ENCODE measurements at regions of chr3 and their contacts with region 1.

Region 1: GRCh38 chr3:183357564-183358079 is 70.8 kb downstream of the MCF2L2 start:
- DNase-seq: no peak
- H3K4me3 Mint-ChIP-seq: no peak overlapping the region
- H3K27ac Mint-ChIP-seq: no peak overlapping the region
- H3K4me1 Mint-ChIP-seq: no peaks in the 10 kb centered on the region
- H3K27me3 Mint-ChIP-seq: no peaks in the 10 kb centered on the region
- CTCF ChIP-seq: no peak

Region 2: GRCh38 chr3:183210839-183211341 is 146.7 kb before region 1 on chr3:
- CTCF ChIA-PET with region 1: interaction called, 11 read pairs
- intact Hi-C with region 1: no loop called
- DNase-seq: peak; percentile 19
- H3K4me3 Mint-ChIP-seq: no peak overlapping the region
- H3K27ac Mint-ChIP-seq: peak overlapping the region; percentile 25
- H3K4me1 Mint-ChIP-seq: peaks cover 14% of the 10 kb centered on the region
- H3K27me3 Mint-ChIP-seq: no peaks in the 10 kb centered on the region
- CTCF ChIP-seq: no peak

Region 3: GRCh38 chr3:184459355-184459754 is 1101.7 kb after region 1 on chr3:
- CTCF ChIA-PET with region 1: no interaction called
- intact Hi-C with region 1: no loop called
- DNase-seq: no peak
- H3K4me3 Mint-ChIP-seq: no peak overlapping the region
- H3K27ac Mint-ChIP-seq: no peak overlapping the region
- H3K4me1 Mint-ChIP-seq: no peaks in the 10 kb centered on the region
- H3K27me3 Mint-ChIP-seq: peaks cover 46% of the 10 kb centered on the region
- CTCF ChIP-seq: no peak

Measured in Calu3 (cell line).